AG04449 (cell line): ENCODE measurements at regions of chr1 and their contacts with region 1.

Region 1: GRCh38 chr1:94335950-94336349 is 82.2 kb upstream of the ABCD3 start:
- DNase-seq: peak; percentile 72
- H3K4me3 ChIP-seq: no peak overlapping the region
- CTCF ChIP-seq: peak; percentile 72

Region 2: GRCh38 chr1:94012686-94013624 is 323.0 kb before region 1 on chr1:
- CTCF ChIA-PET with region 1: interaction called, 14 read pairs
- POLR2A ChIA-PET with region 1: no interaction called
- DNase-seq: no peak
- H3K4me3 ChIP-seq: no peak overlapping the region
- CTCF ChIP-seq: no peak

Region 3: DNA sequence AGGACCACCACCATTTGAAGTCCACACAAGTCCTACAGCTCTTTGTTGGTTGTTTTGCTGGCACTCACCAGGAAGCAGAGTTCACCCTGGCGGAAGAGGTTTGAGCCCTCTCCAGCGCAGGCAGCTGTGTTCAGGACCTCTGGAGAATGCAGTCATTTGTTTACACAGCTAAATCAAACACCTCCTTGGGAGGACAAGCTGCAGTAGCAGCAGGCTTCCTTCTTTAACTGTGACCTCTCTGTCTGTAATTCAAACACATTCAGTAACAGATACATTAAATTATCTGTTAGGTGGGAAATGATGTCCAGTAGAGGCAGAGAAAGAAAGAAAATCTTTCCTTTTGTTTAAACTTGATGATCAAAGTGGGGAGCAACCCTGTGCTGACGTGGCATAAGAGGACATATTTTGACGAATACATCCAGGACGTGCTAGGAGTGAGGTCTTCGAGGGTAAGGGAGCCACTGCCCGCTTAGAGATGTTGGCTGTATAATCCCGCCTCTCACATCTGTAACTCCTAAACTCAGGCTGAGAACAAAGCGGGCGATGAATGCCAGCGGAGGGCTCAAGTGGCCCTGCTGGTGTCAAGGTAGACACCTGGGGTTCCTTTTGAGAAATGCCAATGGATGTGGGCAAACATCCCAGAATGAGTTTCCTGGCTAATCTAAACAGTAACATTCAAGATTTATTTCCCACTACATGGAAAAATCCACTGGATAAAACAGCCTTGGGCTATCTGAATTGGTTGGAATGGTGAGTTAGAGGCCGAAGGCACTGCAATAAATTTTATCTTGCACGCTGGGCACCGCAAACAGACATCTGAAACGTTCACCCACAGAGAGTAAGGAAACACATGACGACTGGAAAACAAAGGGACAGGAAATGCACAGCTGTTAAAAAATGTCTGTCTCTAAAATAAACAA is 266.7 kb before region 1 on chr1:
- CTCF ChIA-PET with region 1: interaction called, 726 read pairs
- POLR2A ChIA-PET with region 1: no interaction called
- DNase-seq: no peak
- H3K4me3 ChIP-seq: no peak overlapping the region
- CTCF ChIP-seq: no peak

Region 4: DNA sequence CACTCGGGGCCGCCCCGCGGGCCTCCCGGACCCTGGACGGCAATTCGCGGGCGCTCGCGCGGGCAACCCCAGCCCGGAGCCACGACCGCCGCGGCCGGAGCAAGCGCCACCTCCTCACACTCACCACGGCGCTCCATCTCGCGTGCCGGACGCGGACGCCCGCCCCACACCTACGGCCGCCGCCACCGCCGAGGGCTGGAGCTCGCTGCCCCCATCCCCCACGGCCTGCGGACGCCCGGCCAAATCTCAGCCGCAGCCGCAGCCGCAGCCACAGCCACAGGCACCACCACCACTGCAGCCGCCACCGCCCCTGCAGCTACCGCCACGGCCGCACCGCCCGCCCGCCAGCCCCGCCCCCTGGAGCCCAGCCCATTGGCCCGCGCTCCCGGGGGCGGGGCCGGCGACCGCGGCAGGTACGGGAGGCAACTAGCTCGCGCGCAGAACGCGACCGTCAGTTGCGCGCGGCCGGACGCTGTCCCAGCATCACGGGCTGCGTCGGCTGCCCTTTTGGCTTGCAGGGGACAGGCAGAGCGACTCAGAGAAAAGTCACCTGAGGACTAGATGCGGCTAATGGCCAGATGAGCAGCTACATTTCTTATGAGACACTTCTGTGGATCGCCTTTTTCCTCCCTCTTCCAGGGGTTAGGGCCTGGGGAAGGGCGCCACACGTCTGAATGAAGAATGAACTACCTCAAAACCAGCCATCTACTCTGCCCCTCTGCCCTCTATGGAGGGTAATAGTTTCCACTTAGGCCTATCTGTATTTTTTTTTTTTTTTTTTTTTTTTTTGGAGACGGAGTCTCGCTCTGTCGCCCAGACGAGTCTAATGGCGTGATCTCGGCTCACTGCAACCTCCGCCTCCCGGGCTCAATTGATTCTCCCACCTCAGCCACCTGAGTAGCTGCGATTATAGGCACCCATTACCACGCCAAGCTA is 98.4 kb before region 1 on chr1 and contains the start of gene ARHGAP29:
- CTCF ChIA-PET with region 1: interaction called, 16 read pairs
- POLR2A ChIA-PET with region 1: no interaction called
- DNase-seq: no peak
- H3K4me3 ChIP-seq: peak within 1 kb of the TSS; percentile 83
- CTCF ChIP-seq: no peak

Region 5: GRCh38 chr1:94325379-94326302 is 10.3 kb before region 1 on chr1:
- CTCF ChIA-PET with region 1: interaction called, 40 read pairs
- POLR2A ChIA-PET with region 1: no interaction called
- DNase-seq: peak; percentile 99
- H3K4me3 ChIP-seq: no peak overlapping the region
- CTCF ChIP-seq: no peak

Region 6: GRCh38 chr1:94608142-94608851 is 272.3 kb after region 1 on chr1:
- CTCF ChIA-PET with region 1: no interaction called
- POLR2A ChIA-PET with region 1: no interaction called
- DNase-seq: no peak
- H3K4me3 ChIP-seq: no peak overlapping the region
- CTCF ChIP-seq: no peak

Region 7: GRCh38 chr1:94805912-94806311 is 470.0 kb after region 1 on chr1:
- CTCF ChIA-PET with region 1: interaction called, 30 read pairs
- POLR2A ChIA-PET with region 1: no interaction called
- DNase-seq: no peak
- H3K4me3 ChIP-seq: peak overlapping the region; percentile 0
- CTCF ChIP-seq: peak; percentile 74